Activated naive CD4-positive, alpha-beta T cell treated with anti-CD3 and anti-CD28 coated beads for 36 hours (primary cell): ENCODE measurements at regions of chr19 and their contacts with region 1.

Region 1: GRCh38 chr19:21020298-21021227 is at the start of gene ZNF430:
- DNase-seq: peak; percentile 98
- H3K4me3 Mint-ChIP-seq: peak within 1 kb of the TSS; percentile 98
- H3K27ac Mint-ChIP-seq: peak within 1 kb of the TSS; percentile 98
- H3K4me1 Mint-ChIP-seq: peaks cover 42% of the 10 kb centered on the region
- H3K27me3 Mint-ChIP-seq: no peaks in the 10 kb centered on the region
- total RNA-seq, gene ZNF430: 18.2 to 19.5 TPM

Region 2: GRCh38 chr19:20661150-20661819 is 359.3 kb before region 1 on chr19 and contains the start of gene ZNF626:
- CTCF ChIA-PET with region 1: no interaction called
- intact Hi-C with region 1: loop called (anchors 5 kb)
- DNase-seq: peak; percentile 97
- H3K4me3 Mint-ChIP-seq: peak within 1 kb of the TSS; percentile 93
- H3K27ac Mint-ChIP-seq: peak within 1 kb of the TSS; percentile 91
- H3K4me1 Mint-ChIP-seq: peaks cover 20% of the 10 kb centered on the region
- H3K27me3 Mint-ChIP-seq: no peaks in the 10 kb centered on the region
- total RNA-seq, gene ZNF626: 8.2 to 9.8 TPM

Region 3: DNA sequence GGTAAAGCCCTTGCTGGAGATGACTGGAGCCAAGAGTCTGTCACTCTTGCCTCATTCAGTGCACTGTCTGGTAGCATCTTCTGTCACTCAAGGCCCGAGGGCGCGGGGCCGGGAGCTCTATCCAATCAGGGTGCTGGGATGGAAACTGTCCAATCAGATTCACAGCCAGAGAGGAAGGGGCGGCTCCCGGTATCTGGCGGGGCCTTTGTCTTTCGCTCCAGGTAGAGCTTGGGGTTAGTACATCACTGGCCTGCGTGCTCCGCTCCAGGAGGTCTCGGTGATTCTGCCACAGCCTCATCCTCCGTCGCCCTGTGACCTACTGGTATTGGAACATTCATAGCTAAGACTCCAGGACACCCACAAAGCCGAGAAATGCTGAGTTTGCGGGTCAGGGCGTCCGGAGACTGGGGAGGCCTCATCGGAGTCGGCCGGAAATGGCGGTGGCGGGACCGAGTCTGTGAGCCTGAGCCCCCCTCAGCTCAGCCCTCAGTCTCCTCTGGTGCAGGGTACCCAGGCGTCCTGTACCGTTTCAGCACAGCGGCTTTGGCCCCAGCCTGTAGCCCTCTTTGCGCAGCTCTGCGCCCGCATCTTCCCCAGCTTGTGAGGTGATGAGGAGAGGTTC is 20.7 kb before region 1 on chr19:
- CTCF ChIA-PET with region 1: no interaction called
- intact Hi-C with region 1: loop called (anchors 1 kb)
- DNase-seq: peak; percentile 96
- H3K4me3 Mint-ChIP-seq: peak overlapping the region; percentile 97
- H3K27ac Mint-ChIP-seq: peak overlapping the region; percentile 87
- H3K4me1 Mint-ChIP-seq: peaks cover 3% of the 10 kb centered on the region
- H3K27me3 Mint-ChIP-seq: no peaks in the 10 kb centered on the region

Region 4: DNA sequence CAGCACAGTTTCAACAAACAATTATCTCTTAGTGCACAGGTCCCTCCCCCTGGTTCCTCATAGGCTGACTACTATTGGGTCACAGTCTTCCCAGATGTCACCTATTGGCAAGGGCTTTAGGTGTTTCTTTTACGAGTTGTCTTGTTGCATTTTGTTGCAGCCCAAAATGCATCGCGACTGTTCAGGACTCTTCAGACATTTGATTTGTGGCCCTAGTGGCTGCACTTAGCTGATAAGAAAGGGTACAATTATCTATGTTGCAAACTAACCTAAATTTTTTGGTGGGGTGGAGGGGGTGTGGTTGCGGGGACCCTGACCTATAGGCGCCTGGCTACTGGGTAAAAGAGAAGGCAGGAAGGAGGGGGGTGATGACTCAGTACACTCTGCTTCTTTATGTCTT is 32.3 kb after region 1 on chr19:
- CTCF ChIA-PET with region 1: no interaction called
- intact Hi-C with region 1: no loop called
- DNase-seq: no peak
- H3K4me3 Mint-ChIP-seq: no peak overlapping the region
- H3K27ac Mint-ChIP-seq: no peak overlapping the region
- H3K4me1 Mint-ChIP-seq: no peaks in the 10 kb centered on the region
- H3K27me3 Mint-ChIP-seq: no peaks in the 10 kb centered on the region

Region 5: GRCh38 chr19:21092109-21092508 is 71.5 kb after region 1 on chr19:
- CTCF ChIA-PET with region 1: no interaction called
- intact Hi-C with region 1: no loop called
- DNase-seq: no peak
- H3K4me3 Mint-ChIP-seq: no peak overlapping the region
- H3K27ac Mint-ChIP-seq: no peak overlapping the region
- H3K4me1 Mint-ChIP-seq: no peaks in the 10 kb centered on the region
- H3K27me3 Mint-ChIP-seq: no peaks in the 10 kb centered on the region

Region 6: DNA sequence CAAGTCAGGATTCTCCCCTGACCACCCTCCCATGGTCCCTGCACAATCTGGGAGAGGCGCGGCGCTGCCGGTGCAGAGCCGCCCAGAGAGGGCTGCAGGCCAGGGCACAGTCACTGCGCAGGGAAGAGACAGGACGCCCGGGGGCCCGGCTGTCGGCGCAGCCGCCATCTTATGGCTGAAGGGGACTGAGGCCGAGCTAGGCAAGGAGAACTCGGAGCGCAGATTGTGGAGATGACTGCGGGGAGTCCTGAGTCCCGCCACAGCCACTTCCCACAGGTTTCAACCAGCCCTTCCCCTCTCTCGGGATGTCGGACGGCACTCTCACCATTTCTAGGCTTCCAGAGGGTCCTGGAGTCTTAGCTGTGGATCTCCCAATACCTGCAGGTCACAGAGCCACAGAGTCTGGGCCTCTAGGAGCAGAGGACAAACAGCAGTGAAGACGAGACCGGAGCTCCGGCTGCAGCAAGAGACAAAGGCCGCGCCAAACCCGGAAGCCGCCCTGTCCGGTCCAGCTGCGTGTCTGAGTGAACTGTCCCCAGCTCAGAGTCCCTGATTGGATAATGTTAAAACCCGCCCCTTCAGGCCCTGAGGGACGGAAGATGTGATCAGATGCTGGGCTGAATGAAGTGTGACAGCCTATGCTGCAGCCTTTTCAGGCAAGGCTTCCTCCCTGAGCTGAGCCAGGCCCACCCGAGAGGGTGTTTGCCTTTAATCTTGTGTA is 308.5 kb after region 1 on chr19 and contains the start of gene ZNF708:
- CTCF ChIA-PET with region 1: no interaction called
- intact Hi-C with region 1: loop called (anchors 5 kb)
- DNase-seq: peak; percentile 90
- H3K4me3 Mint-ChIP-seq: peak within 1 kb of the TSS; percentile 98
- H3K27ac Mint-ChIP-seq: peak within 1 kb of the TSS; percentile 98
- H3K4me1 Mint-ChIP-seq: peaks cover 33% of the 10 kb centered on the region
- H3K27me3 Mint-ChIP-seq: no peaks in the 10 kb centered on the region
- total RNA-seq, gene ZNF708: 7.8 to 10.9 TPM

Region 7: GRCh38 chr19:21835810-21836444 is 815.4 kb after region 1 on chr19 and contains the start of gene ZNF43:
- CTCF ChIA-PET with region 1: no interaction called
- intact Hi-C with region 1: loop called (anchors 10 kb)
- DNase-seq: peak; percentile 97
- H3K4me3 Mint-ChIP-seq: peak within 1 kb of the TSS; percentile 98
- H3K27ac Mint-ChIP-seq: peak within 1 kb of the TSS; percentile 99
- H3K4me1 Mint-ChIP-seq: peaks cover 37% of the 10 kb centered on the region
- H3K27me3 Mint-ChIP-seq: no peaks in the 10 kb centered on the region
- total RNA-seq, gene ZNF43: 25.8 to 27.8 TPM